ENCODE measurements at regions of chr4 and their contacts with region 1.

Region 1: GRCh38 chr4:28575297-28575696 is 1714.7 kb downstream of the STIM2 start:
- DNase-seq: no peak
- H3K4me3 Mint-ChIP-seq: no peak overlapping the region
- H3K27ac Mint-ChIP-seq: no peak overlapping the region
- H3K4me1 Mint-ChIP-seq: no peaks in the 10 kb centered on the region
- H3K27me3 Mint-ChIP-seq: no peaks in the 10 kb centered on the region

Region 2: DNA sequence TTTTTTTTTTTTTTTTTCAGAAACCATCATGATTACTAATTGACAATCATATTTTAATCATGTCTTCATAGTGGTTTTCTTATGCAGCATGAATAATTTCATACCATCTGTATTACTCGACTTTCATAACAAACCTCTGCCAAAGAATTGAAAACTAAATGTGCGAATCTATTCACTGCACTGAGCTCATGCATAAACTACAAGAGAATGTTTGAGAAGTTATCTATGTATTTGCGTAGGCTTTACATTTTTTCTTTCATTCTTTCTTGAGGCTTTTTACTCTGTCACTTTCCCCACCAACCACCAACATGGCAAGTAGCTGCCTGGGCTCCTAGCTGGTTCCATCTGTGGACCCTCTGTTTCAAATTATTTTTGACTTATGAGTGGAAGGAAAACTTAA is 46.3 kb after region 1 on chr4:
- intact Hi-C with region 1: loop called (anchors 5 kb)
- DNase-seq: no peak
- H3K4me3 Mint-ChIP-seq: no peak overlapping the region
- H3K27ac Mint-ChIP-seq: no peak overlapping the region
- H3K4me1 Mint-ChIP-seq: no peaks in the 10 kb centered on the region
- H3K27me3 Mint-ChIP-seq: no peaks in the 10 kb centered on the region

Region 3: GRCh38 chr4:28735540-28735939 is 160.2 kb after region 1 on chr4:
- intact Hi-C with region 1: no loop called
- DNase-seq: no peak
- H3K4me3 Mint-ChIP-seq: no peak overlapping the region
- H3K27ac Mint-ChIP-seq: no peak overlapping the region
- H3K4me1 Mint-ChIP-seq: no peaks in the 10 kb centered on the region
- H3K27me3 Mint-ChIP-seq: no peaks in the 10 kb centered on the region

Measured in activated T-helper 1 cell treated with anti-CD3 and anti-CD28 coated beads, Interleukin-12 subunit alpha, Interleukin-12 subunit beta, Interleukin-2, Interleukin-4 antibody, amounts not matched to agents 30 ng/mL and 10 ng/mL and 1 ng/mL, durations not matched to agents 14 hours and 24 hours and 36 hours (primary cell).